Activated CD4-positive, alpha-beta T cell treated with anti-CD3 and anti-CD28 coated beads for 36 hours (primary cell): ENCODE measurements at regions of chr14 and their contacts with region 1.

Region 1: GRCh38 chr14:38073641-38074040 is 134.1 kb upstream of the SSTR1 start:
- DNase-seq: no peak
- ATAC-seq: peak; percentile 29
- H3K4me3 Mint-ChIP-seq: no peak overlapping the region
- H3K27ac Mint-ChIP-seq: no peak overlapping the region
- H3K4me1 Mint-ChIP-seq: peaks cover 59% of the 10 kb centered on the region
- H3K27me3 Mint-ChIP-seq: no peaks in the 10 kb centered on the region

Region 2: DNA sequence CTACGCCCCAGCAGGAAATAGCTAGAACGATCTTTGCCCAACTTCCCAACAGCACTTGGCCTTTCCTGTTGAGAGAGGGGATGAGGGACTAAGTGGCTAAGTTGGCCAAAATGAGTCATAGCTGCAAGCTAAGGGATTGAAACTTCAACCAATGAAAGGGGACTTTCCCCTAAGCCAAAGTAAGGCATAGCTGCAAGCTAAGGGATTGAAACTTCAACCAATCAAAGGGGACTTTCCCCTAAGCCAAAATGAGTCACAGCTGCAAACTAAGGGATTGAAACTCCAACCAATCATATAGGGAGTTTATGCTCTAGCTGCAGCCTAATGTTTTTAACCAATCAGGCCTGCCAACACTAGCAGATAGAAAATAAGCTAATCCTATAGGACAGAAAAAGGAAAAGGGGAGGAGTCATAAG is 33.6 kb after region 1 on chr14:
- CTCF ChIA-PET with region 1: no interaction called
- POLR2A ChIA-PET with region 1: no interaction called
- intact Hi-C with region 1: loop called in 1 of 2 experiments (anchors 2 kb)
- DNase-seq: peak; percentile 4
- ATAC-seq: peak; percentile 87
- H3K4me3 Mint-ChIP-seq: no peak overlapping the region
- H3K27ac Mint-ChIP-seq: no peak overlapping the region
- H3K4me1 Mint-ChIP-seq: peaks cover 12% of the 10 kb centered on the region
- H3K27me3 Mint-ChIP-seq: no peaks in the 10 kb centered on the region